Heart right ventricle (tissue), 16 donors: ENCODE measurements at regions of chr4 and their contacts with region 1.

Region 1: GRCh38 chr4:177339477-177340374 is 30.1 kb downstream of the NEIL3 start:
- DNase-seq: no peak
- ATAC-seq: peak in 4 of 8 donors; percentile 45 to 71 (median 54)
- H3K4me3 ChIP-seq: no peak overlapping the region
- H3K27ac ChIP-seq: no peak overlapping the region
- H3K4me1 ChIP-seq: peaks cover 0 to 8% (median 0%) of the 10 kb centered on the region in 9 donors
- H3K27me3 ChIP-seq: no peaks in the 10 kb centered on the region
- CTCF ChIP-seq: peak; percentile 21 to 72 (median 62)

Region 2: DNA sequence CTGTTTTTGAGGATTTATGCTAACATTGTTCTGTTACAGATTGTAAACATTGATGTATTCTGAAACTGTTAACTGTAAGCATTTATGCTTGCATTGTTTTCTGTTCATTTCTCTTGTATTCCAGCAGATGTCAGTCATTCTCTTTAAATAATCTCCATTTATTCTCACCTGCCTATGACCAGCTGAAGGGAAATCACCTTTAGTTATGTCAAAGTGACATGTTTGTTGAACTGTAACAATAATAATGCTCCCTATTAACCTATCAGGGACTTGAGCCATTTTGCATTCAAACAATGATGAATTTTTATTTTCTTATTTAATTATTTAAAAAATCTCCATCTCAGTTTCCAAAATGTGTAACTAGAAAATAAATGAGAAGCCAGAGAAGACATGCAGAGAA is 961.9 kb before region 1 on chr4:
- intact Hi-C with region 1: loop called in 6 of 10 experiments (anchors 2 to 10 kb)
- DNase-seq: no peak
- ATAC-seq: peak in 2 of 8 donors; percentile 21 to 22
- H3K4me3 ChIP-seq: no peak overlapping the region
- H3K27ac ChIP-seq: no peak overlapping the region
- H3K4me1 ChIP-seq: peaks cover 0 to 1% (median 0%) of the 10 kb centered on the region in 9 donors
- H3K27me3 ChIP-seq: no peaks in the 10 kb centered on the region
- CTCF ChIP-seq: peak in 8 of 9 donors; percentile 29 to 72 (median 52)

Region 3: DNA sequence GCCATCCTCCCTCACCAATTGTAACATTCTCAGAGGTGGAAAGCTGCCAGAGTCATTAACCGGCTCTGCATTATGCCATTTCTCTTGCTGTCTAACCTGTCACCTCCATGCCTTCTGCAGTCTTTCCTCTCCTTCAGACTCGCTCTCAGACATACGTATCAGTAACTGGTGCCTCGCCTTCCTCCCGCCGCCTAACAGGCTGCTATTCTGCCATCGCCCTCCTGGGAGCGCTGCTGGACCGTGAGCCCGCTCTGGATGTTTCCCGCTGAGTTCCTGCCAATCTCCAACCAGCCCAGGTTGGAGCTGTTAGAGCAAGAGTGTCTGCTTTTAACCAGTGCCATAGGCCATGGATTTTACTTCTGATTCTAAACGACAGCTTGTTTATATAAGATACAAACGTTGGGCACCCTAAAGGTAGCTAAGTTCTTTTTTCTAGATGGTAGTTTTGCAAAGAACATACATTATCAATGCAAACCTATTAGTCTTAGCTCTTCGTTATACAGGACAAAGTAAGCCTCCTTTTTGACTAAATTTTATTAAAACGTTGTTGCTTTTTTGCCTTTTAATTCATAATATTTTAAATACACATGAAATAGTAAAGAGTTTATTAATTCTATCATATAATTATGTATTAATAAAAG is 89.5 kb before region 1 on chr4:
- intact Hi-C with region 1: loop called in 7 of 10 experiments (anchors 1 to 5 kb)
- DNase-seq: peak; percentile 41 to 64
- ATAC-seq: peak in 7 of 8 donors; percentile 58 to 84 (median 81)
- H3K4me3 ChIP-seq: no peak overlapping the region
- H3K27ac ChIP-seq: no peak overlapping the region
- H3K4me1 ChIP-seq: no peaks in the 10 kb centered on the region
- H3K27me3 ChIP-seq: peaks cover 0 to 10% (median 0%) of the 10 kb centered on the region in 7 donors
- CTCF ChIP-seq: peak; percentile 66 to 95 (median 85)